CD4-positive, alpha-beta memory T cell (primary cell): ENCODE measurements at regions of chr1 and their contacts with region 1.

Region 1: GRCh38 chr1:226736908-226737818 is 1.9 kb downstream of the ITPKB start:
- DNase-seq: peak; percentile 58 to 69 (median 66)
- H3K4me3 ChIP-seq: peak overlapping the region; percentile 95 to 98
- H3K4me3 Mint-ChIP-seq: peak overlapping the region; percentile 90 to 99 (median 97)
- H3K27ac ChIP-seq: peak overlapping the region; percentile 85
- H3K27ac Mint-ChIP-seq: peak overlapping the region in 6 of 7 donors; percentile 70 to 100 (median 85)
- H3K4me1 ChIP-seq: peaks cover 49% of the 10 kb centered on the region
- H3K4me1 Mint-ChIP-seq: peaks cover 18 to 59% (median 33%) of the 10 kb centered on the region in 4 donors
- H3K27me3 ChIP-seq: no peaks in the 10 kb centered on the region
- H3K27me3 Mint-ChIP-seq: peaks cover 0 to 2% of the 10 kb centered on the region in 2 donors

Region 2: GRCh38 chr1:226656601-226657277 is 80.4 kb before region 1 on chr1:
- CTCF ChIA-PET with region 1: interaction called, 7 read pairs
- POLR2A ChIA-PET with region 1: interaction called, 42 read pairs
- intact Hi-C with region 1: no loop called
- DNase-seq: peak; percentile 61 to 85 (median 63)
- H3K4me3 ChIP-seq: peak overlapping the region in 1 of 2 donors; percentile 11
- H3K4me3 Mint-ChIP-seq: peak overlapping the region; percentile 48 to 88 (median 60)
- H3K27ac ChIP-seq: no peak overlapping the region
- H3K27ac Mint-ChIP-seq: peak overlapping the region in 2 of 7 donors; percentile 93 to 97
- H3K4me1 ChIP-seq: no peaks in the 10 kb centered on the region
- H3K4me1 Mint-ChIP-seq: peaks cover 0 to 82% (median 36%) of the 10 kb centered on the region in 4 donors
- H3K27me3 ChIP-seq: no peaks in the 10 kb centered on the region
- H3K27me3 Mint-ChIP-seq: no peaks in the 10 kb centered on the region

Region 3: DNA sequence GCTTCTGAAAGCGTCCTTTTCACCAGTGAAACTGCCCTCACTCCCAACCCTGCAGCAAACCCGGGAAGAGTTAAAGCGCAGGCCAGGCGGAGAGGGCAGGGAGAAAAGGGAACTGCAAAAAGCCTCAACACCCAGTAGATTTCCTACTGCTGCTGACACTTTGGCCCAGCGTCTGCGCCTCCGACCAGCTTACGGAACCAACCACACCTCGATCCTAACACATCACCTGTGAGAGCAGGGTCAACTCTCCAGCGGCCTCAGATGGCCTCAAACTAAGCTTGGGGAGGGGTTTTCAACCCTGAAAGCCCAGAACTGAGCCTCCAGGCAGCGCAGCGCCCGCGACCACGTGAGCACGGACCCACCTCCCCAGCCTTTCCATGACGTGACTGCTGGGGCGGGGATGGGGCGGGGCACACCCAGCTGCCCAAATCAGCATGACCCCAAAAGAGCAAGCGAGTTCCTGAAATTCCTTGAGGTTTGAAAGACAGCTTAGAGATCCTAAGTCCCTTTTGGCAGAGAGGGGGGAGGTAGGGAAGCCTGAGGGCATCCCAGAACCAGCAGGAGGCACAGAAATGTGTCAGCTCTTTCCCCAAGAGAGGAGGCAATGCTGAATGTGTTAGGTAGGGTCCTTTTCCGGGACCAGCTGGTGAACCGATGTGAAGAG is 57.2 kb before region 1 on chr1:
- CTCF ChIA-PET with region 1: interaction called, 5 read pairs
- POLR2A ChIA-PET with region 1: no interaction called
- intact Hi-C with region 1: loop called (anchors 1 kb)
- DNase-seq: peak; percentile 66 to 90 (median 73)
- H3K4me3 ChIP-seq: peak overlapping the region; percentile 1 to 12
- H3K4me3 Mint-ChIP-seq: peak overlapping the region; percentile 74 to 93 (median 85)
- H3K27ac ChIP-seq: peak overlapping the region; percentile 89
- H3K27ac Mint-ChIP-seq: peak overlapping the region; percentile 94 to 100 (median 99)
- H3K4me1 ChIP-seq: peaks cover 99% of the 10 kb centered on the region
- H3K4me1 Mint-ChIP-seq: peaks cover 95 to 100% (median 98%) of the 10 kb centered on the region in 4 donors
- H3K27me3 ChIP-seq: no peaks in the 10 kb centered on the region
- H3K27me3 Mint-ChIP-seq: peaks cover 0 to 5% of the 10 kb centered on the region in 2 donors

Region 4: GRCh38 chr1:226702957-226703831 is 34.0 kb before region 1 on chr1:
- CTCF ChIA-PET with region 1: interaction called, 5 read pairs
- POLR2A ChIA-PET with region 1: interaction called, 5 read pairs
- intact Hi-C with region 1: loop called (anchors 2 kb)
- DNase-seq: peak; percentile 83 to 89 (median 86)
- H3K4me3 ChIP-seq: peak overlapping the region; percentile 21 to 68
- H3K4me3 Mint-ChIP-seq: peak overlapping the region; percentile 81 to 88 (median 85)
- H3K27ac ChIP-seq: peak overlapping the region; percentile 86
- H3K27ac Mint-ChIP-seq: peak overlapping the region; percentile 88 to 98 (median 96)
- H3K4me1 ChIP-seq: peaks cover 87% of the 10 kb centered on the region
- H3K4me1 Mint-ChIP-seq: peaks cover 59 to 92% (median 81%) of the 10 kb centered on the region in 4 donors
- H3K27me3 ChIP-seq: no peaks in the 10 kb centered on the region
- H3K27me3 Mint-ChIP-seq: no peaks in the 10 kb centered on the region

Region 5: GRCh38 chr1:226798427-226799411 is 61.6 kb after region 1 on chr1:
- CTCF ChIA-PET with region 1: interaction called, 5 read pairs
- POLR2A ChIA-PET with region 1: interaction called, 36 read pairs
- intact Hi-C with region 1: loop called (anchors 2 kb)
- DNase-seq: peak; percentile 64 to 76 (median 68)
- H3K4me3 ChIP-seq: peak overlapping the region in 1 of 2 donors; percentile 5
- H3K4me3 Mint-ChIP-seq: peak overlapping the region; percentile 27 to 90 (median 80)
- H3K27ac ChIP-seq: peak overlapping the region; percentile 80
- H3K27ac Mint-ChIP-seq: peak overlapping the region; percentile 97 to 100 (median 99)
- H3K4me1 ChIP-seq: peaks cover 38% of the 10 kb centered on the region
- H3K4me1 Mint-ChIP-seq: peaks cover 26 to 45% (median 34%) of the 10 kb centered on the region in 4 donors
- H3K27me3 ChIP-seq: no peaks in the 10 kb centered on the region
- H3K27me3 Mint-ChIP-seq: no peaks in the 10 kb centered on the region

Region 6: GRCh38 chr1:226827968-226828513 is 90.9 kb after region 1 on chr1:
- CTCF ChIA-PET with region 1: interaction called, 11 read pairs
- POLR2A ChIA-PET with region 1: interaction called, 13 read pairs
- intact Hi-C with region 1: loop called (anchors 1 kb)
- DNase-seq: peak; percentile 87 to 93 (median 90)
- H3K4me3 ChIP-seq: peak overlapping the region in 1 of 2 donors; percentile 11
- H3K4me3 Mint-ChIP-seq: peak overlapping the region; percentile 31 to 77 (median 53)
- H3K27ac ChIP-seq: peak overlapping the region; percentile 48
- H3K27ac Mint-ChIP-seq: peak overlapping the region; percentile 70 to 87 (median 80)
- H3K4me1 ChIP-seq: peaks cover 11% of the 10 kb centered on the region
- H3K4me1 Mint-ChIP-seq: peaks cover 9 to 31% (median 14%) of the 10 kb centered on the region in 4 donors
- H3K27me3 ChIP-seq: no peaks in the 10 kb centered on the region
- H3K27me3 Mint-ChIP-seq: no peaks in the 10 kb centered on the region